Right cardiac atrium (tissue), 5 donors: ENCODE measurements at regions of chr15 and their contacts with region 1.

Region 1: DNA sequence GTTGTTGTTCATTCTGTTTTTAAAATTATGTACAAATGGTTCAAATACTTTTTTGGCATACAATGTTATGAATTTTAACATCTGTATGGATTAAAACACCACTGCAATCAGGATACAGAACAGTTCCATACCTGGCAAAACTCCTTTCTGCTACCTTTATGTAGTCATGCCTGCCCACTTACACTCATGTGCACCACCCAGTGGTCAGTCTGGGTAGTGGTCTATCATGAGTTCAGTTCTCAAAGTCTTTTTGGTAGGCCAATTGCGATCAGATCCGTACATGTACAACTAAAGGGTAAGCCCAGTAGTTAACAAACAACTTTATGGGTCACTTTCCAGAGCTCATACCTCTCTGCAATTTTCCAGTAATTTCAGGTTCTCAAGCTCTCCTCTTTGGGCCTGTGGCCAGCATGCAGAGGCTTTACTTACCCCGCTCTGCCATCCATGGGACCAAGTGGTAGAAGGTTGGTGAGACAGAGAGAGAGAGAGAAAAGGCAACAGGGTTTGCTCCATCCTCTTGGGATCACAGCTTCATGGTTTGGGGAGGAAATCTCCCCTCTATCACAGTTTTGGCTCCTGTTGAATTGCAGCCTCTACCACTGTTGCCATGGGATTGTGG is 63.9 kb upstream of the FAM98B start:
- DNase-seq: peak in 2 of 3 donors; percentile 51 to 87
- ATAC-seq: peak; percentile 51 to 58
- H3K4me3 ChIP-seq: no peak overlapping the region
- H3K27ac ChIP-seq: no peak overlapping the region
- H3K4me1 ChIP-seq: no peaks in the 10 kb centered on the region
- H3K27me3 ChIP-seq: no peaks in the 10 kb centered on the region

Region 2: DNA sequence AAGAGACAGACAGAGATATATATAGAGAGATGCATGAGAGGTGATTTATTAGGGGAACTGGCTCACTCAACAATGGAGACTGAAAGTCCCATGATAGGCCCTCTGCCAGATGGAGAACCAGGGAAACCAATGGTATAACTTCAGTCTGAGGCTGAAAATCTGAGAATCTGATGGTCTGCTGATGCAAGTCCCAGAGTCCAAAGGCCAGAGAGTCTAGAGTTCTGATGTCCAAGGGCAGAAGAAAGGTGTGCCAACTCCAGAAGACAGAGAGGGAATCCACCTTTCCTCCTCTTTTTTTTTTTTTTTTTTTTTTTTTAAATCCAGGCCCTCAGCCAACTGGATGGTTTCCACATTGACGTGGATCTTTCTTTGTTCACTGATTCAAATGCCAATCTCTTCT is 1091.8 kb before region 1 on chr15:
- intact Hi-C with region 1: no loop called
- DNase-seq: no peak
- ATAC-seq: no peak
- H3K4me3 ChIP-seq: no peak overlapping the region
- H3K27ac ChIP-seq: no peak overlapping the region
- H3K4me1 ChIP-seq: no peaks in the 10 kb centered on the region
- H3K27me3 ChIP-seq: no peaks in the 10 kb centered on the region

Region 3: GRCh38 chr15:37995461-37996347 is 394.3 kb before region 1 on chr15:
- intact Hi-C with region 1: loop called in 1 of 4 experiments (anchors 10 kb)
- DNase-seq: peak in 1 of 3 donors; percentile 35
- ATAC-seq: peak; percentile 81 to 85
- H3K4me3 ChIP-seq: no peak overlapping the region
- H3K27ac ChIP-seq: no peak overlapping the region
- H3K4me1 ChIP-seq: peaks cover 1% of the 10 kb centered on the region
- H3K27me3 ChIP-seq: no peaks in the 10 kb centered on the region

Region 4: DNA sequence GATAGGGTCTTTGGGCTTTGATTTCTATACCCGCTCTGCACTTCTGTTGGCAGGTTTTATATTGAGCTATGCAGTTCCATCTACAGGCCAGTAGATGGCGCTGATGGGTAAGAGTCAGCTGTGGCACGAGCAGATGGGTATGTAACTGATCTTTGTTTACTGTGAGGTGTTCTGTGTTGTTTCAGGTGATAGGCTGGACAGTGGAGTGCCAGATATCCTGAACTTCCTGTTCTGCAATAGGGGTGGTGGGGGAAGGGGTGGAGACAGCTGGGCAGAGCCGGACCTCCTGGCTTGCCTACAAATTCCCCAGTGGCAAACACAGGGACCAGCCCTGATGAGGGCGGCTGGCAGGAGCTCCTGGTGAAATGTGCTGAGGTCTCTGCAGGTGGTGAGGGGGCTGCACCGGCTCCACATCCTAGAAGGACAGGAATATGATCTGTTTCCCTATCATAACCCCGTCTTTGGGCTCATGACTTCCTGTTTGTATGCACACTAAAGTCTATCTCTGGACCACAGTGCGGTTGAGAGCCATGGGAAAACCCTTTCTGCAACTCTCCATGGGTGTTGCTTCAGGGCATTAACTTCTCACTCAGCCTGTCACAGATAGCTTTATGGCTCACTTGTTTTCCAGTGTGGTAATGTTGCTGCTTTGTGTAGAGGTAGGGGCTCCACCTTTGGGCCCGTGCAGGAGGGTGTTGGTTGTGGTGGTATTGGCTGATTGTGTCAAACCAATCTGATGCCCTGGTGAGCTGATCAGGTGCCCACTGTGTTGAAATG is 50.5 kb after region 1 on chr15:
- intact Hi-C with region 1: no loop called
- DNase-seq: peak; percentile 14 to 48 (median 38)
- ATAC-seq: peak; percentile 81 to 83
- H3K4me3 ChIP-seq: no peak overlapping the region
- H3K27ac ChIP-seq: no peak overlapping the region
- H3K4me1 ChIP-seq: no peaks in the 10 kb centered on the region
- H3K27me3 ChIP-seq: no peaks in the 10 kb centered on the region